ENCODE measurements at regions of chr3 and their contacts with region 1.

Region 1: DNA sequence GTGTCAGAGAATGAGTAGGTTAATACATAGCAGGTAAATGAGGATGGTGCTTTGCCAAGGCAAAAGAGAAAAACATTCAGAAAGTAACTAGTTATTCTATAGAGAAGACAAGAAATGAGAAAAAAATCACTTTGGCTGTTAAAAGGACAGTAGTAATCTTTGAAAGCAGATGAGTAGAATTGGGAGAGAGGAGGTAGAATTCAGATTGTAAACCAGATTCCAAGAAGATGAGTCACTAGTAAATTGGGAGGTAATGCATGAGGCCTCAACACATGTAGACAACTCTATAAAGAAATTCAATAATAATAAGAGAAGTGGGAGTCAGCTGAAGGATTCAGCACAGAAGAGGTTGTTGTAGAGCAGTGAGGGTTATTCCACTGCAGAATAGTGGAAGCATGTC is 81.4 kb downstream of the MBNL1 start:
- DNase-seq: no peak
- H3K4me3 Mint-ChIP-seq: no peak overlapping the region
- H3K27ac Mint-ChIP-seq: no peak overlapping the region
- H3K4me1 Mint-ChIP-seq: peaks cover 24% of the 10 kb centered on the region
- H3K27me3 Mint-ChIP-seq: no peaks in the 10 kb centered on the region

Region 2: GRCh38 chr3:152331018-152331541 is 19.1 kb before region 1 on chr3:
- intact Hi-C with region 1: loop called (anchors 2 kb)
- DNase-seq: no peak
- H3K4me3 Mint-ChIP-seq: peak overlapping the region; percentile 12
- H3K27ac Mint-ChIP-seq: peak overlapping the region; percentile 86
- H3K4me1 Mint-ChIP-seq: peaks cover 83% of the 10 kb centered on the region
- H3K27me3 Mint-ChIP-seq: no peaks in the 10 kb centered on the region

Region 3: DNA sequence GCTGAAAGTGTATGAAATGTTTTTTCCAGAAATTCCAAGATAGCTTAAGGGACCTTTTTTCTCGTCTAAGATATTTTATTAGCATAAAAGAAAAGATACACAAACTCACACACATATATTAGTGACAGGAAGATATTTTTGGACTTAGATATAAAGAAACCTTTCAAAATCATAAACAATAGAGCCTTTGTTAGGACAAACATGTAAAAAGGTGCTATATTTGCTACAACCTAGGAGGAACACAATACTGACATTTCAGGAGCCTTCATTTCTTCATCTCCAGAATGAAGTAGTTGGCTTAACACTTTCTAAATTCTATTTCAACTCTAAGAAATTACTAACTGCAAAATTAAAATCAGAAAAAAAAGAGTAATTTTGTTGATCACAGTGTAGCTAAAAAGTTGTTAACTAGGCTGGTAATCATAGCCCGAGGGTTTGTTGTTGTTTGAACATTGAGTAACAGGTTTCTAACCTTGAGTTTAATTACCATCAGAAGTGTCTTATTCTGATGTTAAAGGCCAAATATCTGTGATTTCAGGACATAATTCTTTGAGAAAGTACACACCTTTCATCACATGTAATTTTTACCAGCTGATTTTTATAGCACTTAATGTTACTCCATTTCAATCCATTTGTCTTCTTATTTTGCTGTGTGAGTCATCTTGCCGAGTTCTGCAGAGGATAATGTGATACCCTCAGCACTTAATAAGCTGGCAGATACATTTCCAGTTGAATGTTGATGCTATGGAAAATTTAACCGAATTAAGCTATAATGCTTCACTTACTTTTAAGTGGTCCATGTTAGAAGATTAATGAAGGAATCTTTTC is 15.8 kb after region 1 on chr3:
- intact Hi-C with region 1: loop called (anchors 2 kb)
- DNase-seq: no peak
- H3K4me3 Mint-ChIP-seq: no peak overlapping the region
- H3K27ac Mint-ChIP-seq: no peak overlapping the region
- H3K4me1 Mint-ChIP-seq: peaks cover 65% of the 10 kb centered on the region
- H3K27me3 Mint-ChIP-seq: no peaks in the 10 kb centered on the region

Region 4: GRCh38 chr3:152471814-152472671 is 121.9 kb after region 1 on chr3:
- intact Hi-C with region 1: no loop called
- DNase-seq: peak; percentile 41
- H3K4me3 Mint-ChIP-seq: peak overlapping the region; percentile 1
- H3K27ac Mint-ChIP-seq: peak overlapping the region; percentile 10
- H3K4me1 Mint-ChIP-seq: peaks cover 9% of the 10 kb centered on the region
- H3K27me3 Mint-ChIP-seq: peaks cover 7% of the 10 kb centered on the region

Region 5: GRCh38 chr3:152742368-152743347 is 392.5 kb after region 1 on chr3:
- intact Hi-C with region 1: no loop called
- DNase-seq: no peak
- H3K4me3 Mint-ChIP-seq: no peak overlapping the region
- H3K27ac Mint-ChIP-seq: no peak overlapping the region
- H3K4me1 Mint-ChIP-seq: peaks cover 7% of the 10 kb centered on the region
- H3K27me3 Mint-ChIP-seq: peaks cover 6% of the 10 kb centered on the region

Region 6: DNA sequence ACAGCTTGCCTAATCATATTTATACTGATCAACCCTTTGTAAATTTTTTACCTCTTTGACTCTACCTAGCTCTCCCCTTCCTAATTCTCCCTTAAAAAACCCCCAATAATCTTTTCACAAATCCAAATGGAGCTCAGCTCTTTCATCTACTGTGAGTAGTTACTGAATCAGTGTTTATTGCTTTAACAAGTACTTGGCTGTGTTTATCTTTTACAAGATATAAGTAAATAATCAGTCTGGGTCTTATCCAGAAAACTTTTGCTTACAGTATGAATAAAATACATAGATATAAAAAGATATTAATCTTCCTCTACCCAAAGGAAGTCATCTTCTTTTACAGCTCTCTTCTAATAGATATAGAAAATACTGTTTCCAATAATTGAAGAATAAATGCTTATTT is 1178.3 kb after region 1 on chr3:
- intact Hi-C with region 1: no loop called
- DNase-seq: no peak
- H3K4me3 Mint-ChIP-seq: no peak overlapping the region
- H3K27ac Mint-ChIP-seq: no peak overlapping the region
- H3K4me1 Mint-ChIP-seq: no peaks in the 10 kb centered on the region
- H3K27me3 Mint-ChIP-seq: peaks cover 4% of the 10 kb centered on the region

Measured in activated T-helper 1 cell treated with anti-CD3 and anti-CD28 coated beads, Interleukin-12 subunit alpha, Interleukin-12 subunit beta, Interleukin-2, Interleukin-4 antibody, amounts not matched to agents 30 ng/mL and 10 ng/mL and 1 ng/mL, durations not matched to agents 14 hours and 24 hours and 36 hours (primary cell).